ENCODE measurements at regions of chr6 and their contacts with region 1.

Region 1: DNA sequence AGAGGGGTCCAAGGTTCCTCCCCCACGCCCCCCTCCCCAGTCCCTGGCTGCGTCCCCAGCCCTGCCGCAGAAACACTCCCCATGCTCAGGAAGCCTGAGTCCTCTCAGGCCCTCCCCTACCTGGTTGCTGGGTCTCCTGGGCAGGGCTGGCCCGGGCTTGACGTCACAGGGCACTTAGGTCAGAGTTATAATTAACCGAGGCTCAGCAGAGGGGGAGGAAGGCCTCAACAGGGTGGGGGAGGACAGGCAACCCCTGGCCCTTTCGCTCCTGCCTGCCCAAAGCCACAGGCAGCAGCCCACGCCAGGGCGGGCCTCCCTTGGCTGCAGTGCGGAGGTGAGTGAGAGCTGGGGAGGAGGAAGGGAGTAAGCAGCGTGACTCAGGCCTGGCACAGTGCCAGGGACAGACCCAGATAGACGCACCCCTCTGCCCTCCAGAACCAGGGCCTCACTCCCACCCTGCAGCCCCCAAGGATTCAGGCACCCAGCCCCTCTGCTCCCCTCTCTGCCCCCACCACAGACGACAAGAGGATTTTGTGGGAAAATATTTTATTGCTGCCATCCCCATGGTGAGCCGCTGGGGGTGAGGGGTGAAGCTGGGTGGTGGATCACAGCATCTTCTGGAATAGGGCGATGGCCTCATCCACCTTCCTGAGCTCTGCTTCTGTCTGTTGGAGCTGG is at the start of gene VWA7:
- DNase-seq: peak; percentile 70
- ATAC-seq: peak; percentile 95
- H3K4me3 ChIP-seq: no peak within 1 kb of the TSS
- H3K27ac ChIP-seq: peak within 1 kb of the TSS; percentile 37; the same call in 1 of the 2 replicates
- H3K4me1 ChIP-seq: peaks cover 18% of the 10 kb centered on the region
- H3K27me3 ChIP-seq: no peaks in the 10 kb centered on the region
- CTCF ChIP-seq: no peak
- EP300 ChIP-seq: peak; percentile 33 to 39; a peak in 2 of 4 replicates
- POLR2A ChIP-seq: peak; percentile 72
- RAD21 ChIP-seq: no peak
- polyA plus RNA-seq, gene VWA7: 0.11 TPM in 1 of 2 experiments, not detected in the other

Region 2: DNA sequence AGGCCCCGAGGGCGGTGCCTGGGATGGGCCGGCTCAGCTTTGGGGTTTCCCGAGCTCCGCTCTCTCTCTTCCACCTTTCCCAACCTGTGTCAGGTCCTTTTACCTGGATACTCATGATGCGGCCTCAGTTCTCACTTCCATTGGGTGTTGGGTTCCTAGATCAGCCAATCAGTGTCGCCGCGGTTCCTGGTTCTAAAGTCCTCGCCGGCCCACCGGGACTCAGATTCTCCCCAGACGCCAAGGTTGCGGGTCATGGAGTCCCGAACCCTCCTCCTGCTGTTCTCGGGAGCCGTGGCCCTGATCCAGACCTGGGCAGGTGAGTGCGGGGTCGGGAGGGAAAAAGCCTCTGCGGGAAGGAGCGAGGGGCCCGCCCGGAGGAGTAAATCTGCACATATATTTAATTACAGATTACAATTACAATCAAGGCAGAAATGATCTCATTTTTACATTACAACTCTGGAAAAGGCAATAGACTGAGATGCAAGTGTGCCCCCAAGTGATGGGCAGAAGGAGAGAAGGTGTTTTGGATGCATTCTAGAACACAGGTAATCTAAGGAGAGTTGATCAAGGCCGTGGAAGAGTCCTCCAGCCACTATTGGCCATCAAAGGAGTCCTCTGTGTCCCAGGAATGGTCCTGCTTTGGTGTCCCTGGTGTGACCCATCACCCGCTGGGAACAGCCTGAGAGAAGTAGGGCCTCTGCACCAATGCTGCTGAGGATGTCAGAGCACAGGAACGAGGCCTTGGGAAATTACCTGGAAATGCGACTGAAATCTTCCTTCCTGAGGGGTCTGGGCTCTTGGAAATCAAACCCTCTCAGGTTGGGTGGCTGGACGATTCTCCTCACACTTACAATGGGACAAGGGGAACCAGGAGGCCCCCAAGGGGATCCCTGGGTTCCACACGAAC is 313.9 kb before region 1 on chr6:
- CTCF ChIA-PET with region 1: no interaction called
- POLR2A ChIA-PET with region 1: no interaction called
- RAD21 ChIA-PET with region 1: no interaction called
- SMC1A ChIA-PET with region 1: no interaction called
- in situ Hi-C with region 1: no loop called
- intact Hi-C with region 1: no loop called
- DNase-seq: peak; percentile 96
- ATAC-seq: peak; percentile 92
- H3K4me3 ChIP-seq: peak overlapping the region; percentile 98
- H3K27ac ChIP-seq: peak overlapping the region; percentile 89
- H3K4me1 ChIP-seq: peaks cover 11% of the 10 kb centered on the region
- H3K27me3 ChIP-seq: no peaks in the 10 kb centered on the region
- CTCF ChIP-seq: no peak
- EP300 ChIP-seq: no peak; a peak in 1 of 4 replicates
- POLR2A ChIP-seq: peak; percentile 96
- RAD21 ChIP-seq: no peak

Region 3: GRCh38 chr6:31502586-31502985 is 274.5 kb before region 1 on chr6:
- CTCF ChIA-PET with region 1: no interaction called
- POLR2A ChIA-PET with region 1: no interaction called
- RAD21 ChIA-PET with region 1: no interaction called
- SMC1A ChIA-PET with region 1: no interaction called
- in situ Hi-C with region 1: no loop called
- intact Hi-C with region 1: no loop called
- DNase-seq: no peak
- ATAC-seq: no peak
- H3K4me3 ChIP-seq: no peak overlapping the region
- H3K27ac ChIP-seq: no peak overlapping the region
- H3K4me1 ChIP-seq: no peaks in the 10 kb centered on the region
- H3K27me3 ChIP-seq: no peaks in the 10 kb centered on the region
- CTCF ChIP-seq: no peak
- EP300 ChIP-seq: no peak
- POLR2A ChIP-seq: no peak
- RAD21 ChIP-seq: no peak

Region 4: GRCh38 chr6:31815025-31815838 is 38.1 kb after region 1 on chr6 and contains the starts of genes HSPA1A and HSPA1L:
- CTCF ChIA-PET with region 1: interaction called, 3 read pairs
- POLR2A ChIA-PET with region 1: interaction called, 12 read pairs
- RAD21 ChIA-PET with region 1: interaction called, 3 read pairs
- SMC1A ChIA-PET with region 1: interaction called, 5 read pairs
- in situ Hi-C with region 1: no loop called
- intact Hi-C with region 1: loop called (anchors 10 kb)
- DNase-seq: no peak
- ATAC-seq: peak; percentile 58
- H3K4me3 ChIP-seq: peak within 1 kb of the TSS; percentile 94
- H3K27ac ChIP-seq: peak within 1 kb of the TSS; percentile 58
- H3K4me1 ChIP-seq: peaks cover 29% of the 10 kb centered on the region
- H3K27me3 ChIP-seq: no peaks in the 10 kb centered on the region
- CTCF ChIP-seq: no peak
- EP300 ChIP-seq: 0 out of 4 replicates have a peak, but pooled peaks of 1 of the 2 experiments have one; percentile 30
- POLR2A ChIP-seq: peak; percentile 81
- RAD21 ChIP-seq: no peak
- polyA plus RNA-seq, gene HSPA1A: 0.29 to 1.3 TPM
- polyA plus RNA-seq, gene HSPA1L: 0.69 TPM

Region 5: DNA sequence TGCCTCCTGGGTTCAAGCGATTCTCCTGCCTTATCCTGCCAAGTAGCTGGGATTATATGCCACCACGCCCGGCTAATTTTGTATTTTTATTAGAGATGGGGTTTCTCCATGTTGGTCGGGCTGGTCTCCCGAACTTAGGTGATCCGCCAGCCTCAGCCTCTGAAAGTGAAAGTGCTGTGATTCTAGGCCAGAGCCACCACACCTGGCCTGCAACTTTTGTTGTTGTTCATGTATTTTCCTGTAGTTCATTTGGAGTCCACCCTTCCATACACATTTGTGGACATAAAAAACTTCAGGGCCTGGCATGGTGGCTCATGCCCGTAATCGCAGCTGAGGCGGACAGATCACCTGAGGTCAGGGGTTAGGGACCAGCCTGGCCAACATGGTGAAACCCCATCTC is 64.9 kb after region 1 on chr6:
- CTCF ChIA-PET with region 1: no interaction called
- POLR2A ChIA-PET with region 1: no interaction called
- RAD21 ChIA-PET with region 1: no interaction called
- SMC1A ChIA-PET with region 1: no interaction called
- in situ Hi-C with region 1: no loop called
- intact Hi-C with region 1: no loop called
- DNase-seq: no peak
- ATAC-seq: no peak
- H3K4me3 ChIP-seq: no peak overlapping the region
- H3K27ac ChIP-seq: no peak overlapping the region
- H3K4me1 ChIP-seq: peaks cover 13% of the 10 kb centered on the region
- H3K27me3 ChIP-seq: no peaks in the 10 kb centered on the region
- CTCF ChIP-seq: no peak
- EP300 ChIP-seq: no peak
- POLR2A ChIP-seq: no peak; the same call in 1 of the 2 replicates
- RAD21 ChIP-seq: no peak